ENCODE measurements at regions of chr20 and their contacts with region 1.

Region 1: DNA sequence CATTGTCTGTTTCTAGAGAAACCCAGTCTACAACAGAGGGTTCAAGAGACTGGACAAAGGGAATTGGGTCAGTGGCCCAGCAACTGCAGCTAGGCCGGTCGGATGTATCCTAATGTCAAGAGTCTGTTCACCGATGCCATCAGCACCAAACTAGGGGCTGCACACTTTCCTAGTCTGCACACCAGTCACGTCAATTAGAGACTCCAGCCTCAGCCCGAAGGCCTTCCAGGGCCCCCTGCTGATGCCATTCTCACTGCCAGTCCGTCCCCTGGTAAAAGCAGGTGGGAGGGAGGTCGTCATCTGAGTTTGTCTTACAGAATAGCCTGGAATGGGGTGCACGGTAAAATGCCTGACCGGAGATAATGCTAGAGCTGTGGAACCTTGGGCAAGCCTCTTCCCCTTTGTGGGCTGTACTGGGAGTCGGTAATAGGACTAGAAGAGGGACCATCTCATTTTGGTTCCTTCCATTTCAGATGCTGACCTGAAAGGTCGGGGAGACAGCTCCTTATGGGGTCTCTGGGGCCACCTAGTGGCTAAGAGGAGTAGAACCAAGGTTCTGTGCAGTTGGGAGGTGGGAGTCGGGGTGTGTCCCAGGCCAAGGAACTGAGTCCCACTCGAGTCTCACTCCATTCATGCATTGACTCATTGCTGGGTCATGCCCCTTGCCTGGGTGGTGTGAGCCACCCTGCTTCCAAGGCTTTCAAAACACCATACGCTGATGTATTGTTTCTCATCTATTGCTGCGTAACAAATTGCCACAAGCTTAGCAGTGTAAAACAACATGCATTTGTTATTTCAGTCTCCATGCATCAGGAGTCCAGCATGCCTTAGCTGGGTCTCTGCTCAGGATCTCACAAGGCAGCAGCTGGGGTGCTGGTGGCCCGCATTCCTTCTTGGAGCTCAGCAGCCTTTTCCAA is 5.1 kb downstream of the SOX12 start:
- DNase-seq: peak; percentile 72
- H3K4me3 Mint-ChIP-seq: no peak overlapping the region
- H3K27ac Mint-ChIP-seq: no peak overlapping the region
- H3K4me1 Mint-ChIP-seq: peaks cover 26% of the 10 kb centered on the region
- H3K27me3 Mint-ChIP-seq: no peaks in the 10 kb centered on the region

Region 2: DNA sequence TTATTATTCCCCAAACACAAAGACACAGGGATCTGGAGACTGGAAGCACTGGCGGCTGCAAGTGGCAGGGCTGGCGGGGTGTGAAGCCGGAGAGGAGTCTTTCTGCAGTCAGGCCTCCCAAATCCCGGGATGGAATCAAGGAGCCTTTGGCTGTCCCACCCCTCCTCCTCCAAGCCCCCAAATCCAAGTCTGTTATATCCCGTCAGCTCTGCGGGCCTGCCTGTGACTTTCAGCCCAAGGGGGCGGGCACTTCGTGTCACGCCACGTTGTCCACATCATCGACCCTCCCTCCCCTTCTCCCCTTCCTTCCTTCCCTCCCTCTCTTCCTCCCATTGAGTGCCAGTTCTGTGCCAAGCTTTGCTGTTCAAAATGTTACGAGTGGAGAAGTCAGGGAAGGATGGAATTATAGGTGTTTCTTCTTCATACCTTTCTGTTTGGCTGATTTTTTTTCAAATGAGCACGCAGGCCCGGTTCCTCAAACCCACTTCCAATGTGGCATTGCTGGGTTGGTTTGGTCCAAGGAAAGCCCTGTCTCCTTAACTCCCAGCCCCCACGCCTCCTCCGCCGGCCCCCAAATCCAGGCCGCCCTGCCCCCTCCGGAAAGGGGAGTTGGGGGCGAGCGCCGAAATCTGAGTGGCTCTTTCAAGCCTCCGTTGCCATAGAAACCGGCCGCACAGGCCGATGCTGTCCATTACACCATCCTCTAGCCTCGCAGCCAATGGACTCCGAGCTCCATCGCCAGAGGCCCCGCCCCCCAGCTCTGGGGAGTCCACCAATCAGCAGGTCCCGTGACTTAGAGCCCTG is 20.4 kb before region 1 on chr20:
- CTCF ChIA-PET with region 1: interaction called, 12 read pairs
- POLR2A ChIA-PET with region 1: no interaction called
- DNase-seq: peak; percentile 79
- H3K4me3 Mint-ChIP-seq: peak overlapping the region; percentile 50
- H3K27ac Mint-ChIP-seq: no peak overlapping the region
- H3K4me1 Mint-ChIP-seq: peaks cover 13% of the 10 kb centered on the region
- H3K27me3 Mint-ChIP-seq: no peaks in the 10 kb centered on the region

Region 3: DNA sequence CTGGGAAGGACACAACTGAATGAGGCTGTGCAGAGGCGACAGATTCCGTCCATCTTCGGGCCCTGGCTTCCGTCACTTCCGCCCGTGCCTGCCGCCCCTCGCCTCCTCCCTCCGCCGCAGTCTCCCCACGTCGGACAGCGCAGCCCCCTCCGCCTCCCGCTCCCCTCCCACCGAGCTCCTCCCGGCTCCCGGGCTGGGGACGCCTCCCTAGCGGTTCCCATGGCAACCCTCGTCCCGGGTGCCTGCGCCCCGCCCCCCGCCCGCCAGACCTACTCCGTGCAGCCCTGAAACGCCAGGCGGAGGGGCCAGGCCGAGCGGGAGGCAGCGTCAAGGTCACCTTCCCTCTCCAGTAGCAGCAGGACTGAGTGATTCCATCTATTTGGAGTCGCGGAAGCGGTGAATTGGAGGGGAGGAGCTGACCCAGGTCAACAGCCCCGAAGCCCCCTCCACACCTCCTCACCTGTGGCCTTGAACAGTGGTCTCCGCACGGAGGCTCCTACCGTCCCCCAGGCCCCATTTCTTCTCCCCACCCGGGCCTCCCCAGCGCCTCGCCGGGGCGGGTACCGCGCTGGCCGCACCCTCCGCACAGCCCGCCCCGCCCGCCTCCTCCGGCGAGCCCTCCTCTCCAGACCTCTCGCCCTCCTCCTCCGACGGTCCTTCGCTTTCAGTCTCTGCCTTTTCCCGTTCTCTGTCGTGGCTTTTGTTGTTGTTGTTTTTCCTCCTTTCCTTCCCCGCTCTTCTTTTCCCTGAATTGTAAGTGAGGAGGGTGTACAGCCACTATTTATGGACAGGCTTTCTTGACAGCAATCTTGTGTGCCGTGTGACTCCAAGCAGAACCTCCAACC is 17.4 kb after region 1 on chr20:
- CTCF ChIA-PET with region 1: interaction called, 22 read pairs
- POLR2A ChIA-PET with region 1: no interaction called
- DNase-seq: peak; percentile 61
- H3K4me3 Mint-ChIP-seq: peak overlapping the region; percentile 86
- H3K27ac Mint-ChIP-seq: peak overlapping the region; percentile 75
- H3K4me1 Mint-ChIP-seq: peaks cover 29% of the 10 kb centered on the region
- H3K27me3 Mint-ChIP-seq: peaks cover 12% of the 10 kb centered on the region